ENCODE measurements at regions of chr2 and their contacts with region 1.

Region 1: GRCh38 chr2:173134703-173135102 is 59.1 kb downstream of the MAP3K20 start:
- DNase-seq: no peak
- ATAC-seq: peak; percentile 38
- H3K4me3 ChIP-seq: no peak overlapping the region
- H3K4me3 Mint-ChIP-seq: peak overlapping the region in 1 of 10 donors; percentile 58
- H3K27ac ChIP-seq: no peak overlapping the region
- H3K27ac Mint-ChIP-seq: peak overlapping the region in 1 of 9 donors; percentile 72
- H3K4me1 ChIP-seq: peaks cover 3 to 6% of the 10 kb centered on the region in 2 donors
- H3K4me1 Mint-ChIP-seq: peaks cover 16 to 62% (median 19%) of the 10 kb centered on the region in 7 donors
- H3K27me3 ChIP-seq: no peaks in the 10 kb centered on the region
- H3K27me3 Mint-ChIP-seq: peaks cover 15 to 29% (median 28%) of the 10 kb centered on the region in 5 donors

Region 2: DNA sequence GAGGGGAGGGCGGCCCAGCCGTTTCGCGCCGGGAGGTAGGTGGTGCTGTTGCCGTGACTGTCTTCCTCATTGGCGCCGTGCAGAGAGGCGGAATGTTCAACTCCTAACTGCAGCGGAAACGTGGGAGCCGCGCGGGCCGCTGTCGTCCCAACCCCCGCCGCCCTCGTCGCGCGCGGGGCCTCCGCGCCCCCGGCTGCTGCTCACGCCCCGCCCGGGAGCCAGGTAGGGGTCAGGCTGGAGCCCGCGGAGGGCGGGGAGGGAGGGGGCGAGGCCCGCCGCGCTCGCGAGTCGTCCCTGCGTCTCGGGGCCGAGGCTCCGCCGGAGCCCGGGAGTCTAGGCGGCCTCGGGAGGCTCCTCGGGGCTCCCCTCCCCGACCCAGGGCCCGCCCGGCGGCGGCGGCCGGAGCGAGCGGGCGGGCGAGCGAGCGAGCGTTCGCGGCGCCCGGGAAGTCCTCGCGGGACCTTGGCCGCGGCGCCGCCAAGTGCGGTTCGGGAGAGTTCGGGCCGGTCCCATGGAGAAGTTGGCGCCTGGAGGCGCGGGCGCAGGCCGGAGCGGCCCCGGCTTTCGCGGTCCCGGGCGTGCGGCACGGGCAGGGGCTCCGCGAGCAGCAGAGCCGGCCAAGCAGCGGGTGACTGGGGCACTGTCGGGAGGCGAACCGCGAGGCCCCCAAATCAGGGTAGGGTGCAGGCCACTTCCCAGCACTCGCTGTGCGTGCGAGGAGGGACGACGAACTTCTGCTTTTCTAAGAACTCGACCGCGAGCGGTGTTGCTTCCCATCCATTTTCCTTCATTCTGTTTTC is 58.7 kb before region 1 on chr2 and contains the start of gene MAP3K20:
- CTCF ChIA-PET with region 1: no interaction called
- POLR2A ChIA-PET with region 1: no interaction called
- intact Hi-C with region 1: loop called in 1 of 2 experiments (anchors 5 kb)
- DNase-seq: peak in 6 of 9 donors; percentile 13 to 73 (median 27)
- ATAC-seq: peak; percentile 84
- H3K4me3 ChIP-seq: peak within 1 kb of the TSS; percentile 45
- H3K4me3 Mint-ChIP-seq: peak within 1 kb of the TSS; percentile 56 to 89 (median 80)
- H3K27ac ChIP-seq: no peak within 1 kb of the TSS
- H3K27ac Mint-ChIP-seq: peak within 1 kb of the TSS in 2 of 9 donors; percentile 23 to 72
- H3K4me1 ChIP-seq: peaks cover 0 to 10% of the 10 kb centered on the region in 2 donors
- H3K4me1 Mint-ChIP-seq: peaks cover 6 to 25% (median 15%) of the 10 kb centered on the region in 7 donors
- H3K27me3 ChIP-seq: no peaks in the 10 kb centered on the region
- H3K27me3 Mint-ChIP-seq: peaks cover 30 to 57% (median 39%) of the 10 kb centered on the region in 5 donors
- total RNA-seq, gene MAP3K20: 0.30 to 17.0 (median 2.6) TPM

Region 3: DNA sequence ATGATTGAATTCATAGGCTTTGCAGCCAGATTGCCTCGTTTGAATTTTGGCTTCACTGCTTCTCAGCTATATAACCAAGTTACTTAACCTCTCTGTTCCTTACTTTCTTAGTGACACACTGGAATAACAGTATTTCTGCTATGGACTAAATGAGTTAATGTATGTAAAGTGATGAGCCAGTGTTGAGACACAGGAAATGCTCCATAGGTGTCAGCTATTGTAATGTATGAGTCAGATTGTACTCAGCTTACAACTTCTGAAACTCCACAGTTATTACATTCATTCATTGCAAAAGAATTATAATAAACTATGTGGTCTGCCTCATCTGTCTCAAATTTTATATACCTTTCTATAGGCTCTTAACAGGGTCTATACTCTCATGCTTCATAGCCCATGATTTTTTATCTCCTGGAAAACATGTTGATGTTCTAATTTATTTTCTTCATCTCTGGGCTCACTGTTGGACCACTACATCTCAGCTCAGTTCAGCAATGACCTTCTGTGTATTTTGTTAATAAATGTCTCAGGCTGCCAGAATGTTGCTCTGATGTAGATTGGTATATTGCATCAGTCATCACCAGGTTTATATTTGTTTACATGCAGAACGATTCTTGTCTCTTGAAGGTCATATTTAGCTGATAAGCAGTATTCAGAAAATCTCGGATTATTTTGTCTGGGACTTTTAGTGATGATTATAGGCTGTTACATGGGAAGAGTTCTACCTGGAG is 17.1 kb after region 1 on chr2:
- CTCF ChIA-PET with region 1: no interaction called
- POLR2A ChIA-PET with region 1: no interaction called
- intact Hi-C with region 1: loop called (anchors 1 kb)
- DNase-seq: no peak
- ATAC-seq: peak; percentile 72
- H3K4me3 ChIP-seq: no peak overlapping the region
- H3K4me3 Mint-ChIP-seq: no peak overlapping the region
- H3K27ac ChIP-seq: no peak overlapping the region
- H3K27ac Mint-ChIP-seq: no peak overlapping the region
- H3K4me1 ChIP-seq: peaks cover 0 to 12% of the 10 kb centered on the region in 2 donors
- H3K4me1 Mint-ChIP-seq: peaks cover 0 to 37% (median 0%) of the 10 kb centered on the region in 7 donors
- H3K27me3 ChIP-seq: no peaks in the 10 kb centered on the region
- H3K27me3 Mint-ChIP-seq: peaks cover 0 to 20% (median 10%) of the 10 kb centered on the region in 5 donors

Measured in naive thymus-derived CD4-positive, alpha-beta T cell (primary cell).